Panc1 (cell line): ENCODE measurements at regions of chr1 and their contacts with region 1.

Region 1: DNA sequence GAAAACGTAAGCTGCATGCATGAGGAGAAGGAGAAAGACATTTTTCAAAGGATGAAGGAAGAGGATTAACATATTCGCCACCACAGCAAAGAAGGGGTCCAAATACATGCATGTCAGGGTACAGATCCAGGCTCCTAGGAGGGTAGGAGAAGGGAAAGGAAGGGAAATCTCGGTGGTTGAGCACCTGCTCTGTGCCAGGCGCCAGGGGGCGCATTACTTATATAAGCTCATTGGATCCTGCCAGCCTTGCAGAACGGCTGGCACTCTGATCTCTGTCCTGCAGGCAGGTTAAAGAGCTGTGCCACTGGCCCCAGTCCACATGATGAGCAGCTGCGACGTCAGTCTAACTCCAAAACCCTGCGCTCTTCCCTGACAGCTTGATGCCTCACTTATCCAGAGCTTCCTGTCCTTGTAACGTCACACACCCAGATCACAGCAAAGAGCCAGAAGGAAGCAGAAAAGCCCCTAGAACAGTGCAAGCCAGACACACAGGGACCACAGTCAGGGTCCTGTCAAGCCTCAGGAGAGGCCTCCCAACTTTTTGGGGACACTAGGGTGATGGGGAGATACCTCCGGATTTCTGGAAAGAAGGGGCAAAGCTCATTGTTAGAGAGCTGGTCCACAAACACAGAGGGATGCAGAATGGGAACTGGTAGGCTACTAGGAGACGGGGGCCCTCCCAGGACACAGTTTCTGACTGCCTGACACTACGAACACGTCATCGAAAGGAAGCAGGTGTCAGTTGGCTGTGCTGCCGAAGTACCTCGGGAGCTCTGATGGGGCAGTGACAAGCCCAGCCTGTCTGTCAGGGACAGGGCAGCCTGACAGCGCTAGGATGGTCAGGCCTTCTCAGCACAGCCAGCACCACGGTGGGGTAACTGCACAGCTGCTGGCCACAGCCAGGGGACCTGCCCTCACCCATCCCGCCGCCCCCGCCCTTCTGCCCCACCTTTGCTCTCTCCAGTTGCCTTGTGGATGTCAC is 99.1 kb downstream of the BEND5 start:
- DNase-seq: no peak
- ATAC-seq: peak; percentile 88
- H3K4me3 ChIP-seq: no peak overlapping the region
- H3K27ac ChIP-seq: no peak overlapping the region
- H3K4me1 ChIP-seq: no peaks in the 10 kb centered on the region
- H3K27me3 ChIP-seq: no peaks in the 10 kb centered on the region; the same call in 1 of the 2 replicates
- CTCF ChIP-seq: peak; percentile 88

Region 2: GRCh38 chr1:48817505-48818114 is 140.0 kb after region 1 on chr1:
- CTCF ChIA-PET with region 1: interaction called, 11 read pairs
- POLR2A ChIA-PET with region 1: no interaction called
- in situ Hi-C with region 1: no loop called
- intact Hi-C with region 1: loop called (anchors 5 kb)
- DNase-seq: peak; percentile 28
- ATAC-seq: peak; percentile 82
- H3K4me3 ChIP-seq: no peak overlapping the region
- H3K27ac ChIP-seq: no peak overlapping the region
- H3K4me1 ChIP-seq: no peaks in the 10 kb centered on the region
- H3K27me3 ChIP-seq: no peaks in the 10 kb centered on the region
- CTCF ChIP-seq: peak; percentile 89

Region 3: DNA sequence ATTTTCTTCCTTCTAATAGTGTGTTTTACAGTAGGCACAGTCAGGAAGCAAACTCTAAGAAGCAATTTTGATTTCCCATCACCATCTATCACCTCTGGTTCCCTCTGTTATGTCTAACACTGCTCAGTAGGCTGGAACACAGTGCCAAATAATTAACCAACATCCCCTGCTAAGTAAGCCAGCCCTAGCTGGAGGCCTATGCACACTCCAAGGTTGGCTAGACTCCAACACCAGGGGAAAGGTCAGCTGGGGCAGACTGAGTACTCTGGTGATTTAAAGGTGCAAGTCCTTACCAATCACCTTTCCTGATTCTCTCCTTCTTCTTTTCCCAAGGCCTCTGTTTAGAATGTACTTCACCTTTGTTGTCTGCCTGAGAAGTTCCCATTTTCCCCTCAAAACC is 145.6 kb after region 1 on chr1:
- CTCF ChIA-PET with region 1: interaction called, 11 read pairs
- POLR2A ChIA-PET with region 1: no interaction called
- in situ Hi-C with region 1: no loop called
- intact Hi-C with region 1: loop called (anchors 5 kb)
- DNase-seq: no peak
- ATAC-seq: no peak
- H3K4me3 ChIP-seq: no peak overlapping the region
- H3K27ac ChIP-seq: no peak overlapping the region
- H3K4me1 ChIP-seq: no peaks in the 10 kb centered on the region
- H3K27me3 ChIP-seq: no peaks in the 10 kb centered on the region; the same call in 1 of the 2 replicates
- CTCF ChIP-seq: no peak

Region 4: DNA sequence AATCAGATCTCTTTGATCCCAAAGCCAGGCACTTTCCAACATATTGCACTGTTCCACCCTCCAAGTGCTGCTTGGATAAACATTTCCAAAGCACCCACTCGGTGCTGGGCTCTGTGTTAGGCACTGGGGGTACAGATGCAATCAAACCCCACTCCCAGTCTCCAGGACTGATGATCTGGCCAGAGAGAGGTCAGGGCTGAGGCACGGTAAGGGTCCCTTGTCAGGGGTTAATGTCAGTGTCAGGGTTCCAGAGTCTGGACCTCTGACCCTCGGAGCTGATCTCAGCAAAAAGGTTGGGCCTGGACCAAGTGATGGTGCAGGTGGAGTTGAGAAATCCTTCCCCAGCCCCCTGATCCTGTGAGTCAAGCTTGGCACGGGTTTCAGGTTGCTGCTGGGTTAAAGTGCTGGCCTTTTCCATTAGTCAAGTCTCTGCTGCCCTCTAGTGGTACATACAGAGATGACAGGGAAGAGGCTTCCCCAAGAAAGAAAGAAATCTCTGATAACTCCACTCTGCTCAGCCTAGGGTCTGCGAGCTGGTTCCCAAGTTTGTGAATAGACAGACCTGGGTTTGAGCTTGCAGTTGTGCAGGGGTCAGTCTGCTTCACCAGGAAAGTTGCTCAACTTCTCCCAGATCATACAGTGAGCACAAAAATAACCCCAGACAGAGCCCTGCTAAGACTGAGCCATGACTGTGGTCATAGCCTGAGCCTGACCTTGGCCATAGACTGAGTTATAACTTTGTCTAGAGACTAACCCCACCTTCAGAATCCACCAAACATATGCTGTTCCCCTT is 1671.0 kb after region 1 on chr1:
- CTCF ChIA-PET with region 1: no interaction called
- POLR2A ChIA-PET with region 1: no interaction called
- in situ Hi-C with region 1: no loop called
- intact Hi-C with region 1: loop called (anchors 5 kb)
- DNase-seq: peak; percentile 50
- ATAC-seq: peak; percentile 90
- H3K4me3 ChIP-seq: no peak overlapping the region
- H3K27ac ChIP-seq: no peak overlapping the region
- H3K4me1 ChIP-seq: no peaks in the 10 kb centered on the region
- H3K27me3 ChIP-seq: peaks cover 16% of the 10 kb centered on the region
- CTCF ChIP-seq: peak; percentile 86